Kidney (tissue), 22 donors: ENCODE measurements at regions of chr17 and their contacts with region 1.

Region 1: GRCh38 chr17:44872131-44872768 is 24.6 kb downstream of the HIGD1B start:
- DNase-seq: no peak
- H3K4me3 ChIP-seq: no peak overlapping the region
- H3K27ac ChIP-seq: no peak overlapping the region
- H3K4me1 ChIP-seq: no peaks in the 10 kb centered on the region
- H3K27me3 ChIP-seq: no peaks in the 10 kb centered on the region
- CTCF ChIP-seq: no peak

Region 2: DNA sequence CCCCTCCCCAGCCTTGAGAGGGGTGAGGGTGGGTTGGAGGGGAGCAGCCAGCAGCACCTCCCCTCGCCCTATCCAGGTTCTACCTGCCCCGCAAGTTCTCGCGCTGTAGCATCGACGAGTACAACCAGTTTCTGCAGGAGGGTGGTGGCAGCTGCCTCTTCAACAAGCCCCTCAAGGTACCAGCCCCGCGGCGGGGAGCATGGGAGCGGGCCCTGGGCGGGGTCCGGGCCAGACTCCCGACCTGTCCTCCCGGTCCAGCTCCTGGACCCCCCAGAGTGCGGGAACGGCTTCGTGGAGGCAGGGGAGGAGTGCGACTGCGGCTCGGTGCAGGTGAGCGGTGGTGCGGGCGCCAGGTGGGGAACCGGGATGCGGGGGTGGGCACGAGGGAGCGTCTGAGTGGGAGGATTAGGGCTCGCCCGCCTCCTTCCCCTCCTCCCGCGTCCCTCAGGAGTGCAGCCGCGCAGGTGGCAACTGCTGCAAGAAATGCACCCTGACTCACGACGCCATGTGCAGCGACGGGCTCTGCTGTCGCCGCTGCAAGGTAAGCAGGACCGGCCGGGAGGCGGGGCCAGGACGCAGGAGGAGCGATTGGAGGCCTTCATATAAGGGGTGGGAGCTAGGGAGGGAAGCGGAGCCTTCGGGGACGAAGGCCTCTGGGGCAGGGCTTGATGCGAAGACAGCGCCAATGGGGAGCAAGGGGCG is 97.0 kb before region 1 on chr17:
- intact Hi-C with region 1: loop called (anchors 5 kb)
- DNase-seq: peak in 4 of 5 donors; percentile 99
- H3K4me3 ChIP-seq: peak overlapping the region; percentile 21 to 67 (median 50)
- H3K27ac ChIP-seq: no peak overlapping the region
- H3K4me1 ChIP-seq: peaks cover 0 to 19% (median 0%) of the 10 kb centered on the region in 3 donors
- H3K27me3 ChIP-seq: no peaks in the 10 kb centered on the region
- CTCF ChIP-seq: no peak